ENCODE measurements at regions of chr10 and their contacts with region 1.

Region 1: GRCh38 chr10:69639291-69640195 is 9.5 kb downstream of the FAM241B start:
- DNase-seq: peak; percentile 80
- H3K4me3 Mint-ChIP-seq: no peak overlapping the region
- H3K27ac Mint-ChIP-seq: no peak overlapping the region
- H3K4me1 Mint-ChIP-seq: no peaks in the 10 kb centered on the region
- H3K27me3 Mint-ChIP-seq: peaks cover 1% of the 10 kb centered on the region

Region 2: DNA sequence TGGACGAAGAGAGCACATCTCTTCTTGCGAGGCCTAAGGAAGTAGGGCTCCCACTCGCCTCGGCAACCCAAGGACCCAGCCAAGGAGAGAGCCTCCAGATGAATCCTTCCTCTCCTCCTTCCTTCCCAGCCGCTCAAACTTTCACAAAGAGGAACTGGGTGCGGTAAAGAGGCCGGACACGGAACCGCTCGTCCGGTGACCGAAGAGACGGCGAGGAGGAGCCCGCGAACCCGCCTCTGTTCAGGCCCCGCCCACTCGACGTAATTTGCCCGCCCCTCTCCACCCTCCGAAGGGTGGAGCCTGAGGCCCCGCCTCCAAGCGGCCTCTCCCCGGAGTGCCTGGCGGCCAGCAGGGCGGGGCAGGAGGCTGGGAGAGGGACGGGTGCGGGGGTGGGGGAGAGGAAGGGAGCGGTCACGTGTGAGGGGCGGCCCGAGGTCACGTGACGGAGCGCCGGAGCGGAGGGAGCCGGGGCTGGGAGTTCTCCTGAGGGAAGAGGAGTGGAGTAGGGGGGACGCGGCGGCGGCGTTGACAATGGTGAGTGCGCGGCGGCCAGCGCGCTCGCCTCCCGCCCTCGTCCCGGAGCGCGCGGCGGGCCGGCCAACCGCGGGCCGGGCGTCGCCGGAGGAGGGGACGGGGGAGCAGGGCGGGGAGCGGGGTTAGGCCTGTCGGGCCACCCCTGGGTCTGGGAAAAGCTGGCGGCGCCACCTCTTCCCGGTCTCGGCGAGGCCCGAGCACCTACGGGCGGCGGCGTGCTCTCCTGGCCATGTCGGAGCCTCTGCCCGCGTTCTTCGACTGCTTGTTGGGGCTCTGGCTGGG is 515.6 kb before region 1 on chr10 and contains the start of gene VPS26A:
- CTCF ChIA-PET with region 1: no interaction called
- intact Hi-C with region 1: no loop called
- DNase-seq: peak; percentile 99
- H3K4me3 Mint-ChIP-seq: peak within 1 kb of the TSS; percentile 95
- H3K27ac Mint-ChIP-seq: peak within 1 kb of the TSS; percentile 93
- H3K4me1 Mint-ChIP-seq: peaks cover 38% of the 10 kb centered on the region
- H3K27me3 Mint-ChIP-seq: no peaks in the 10 kb centered on the region
- total RNA-seq, gene VPS26A: 26.2 to 27.9 TPM

Region 3: GRCh38 chr10:69425511-69426298 is 213.8 kb before region 1 on chr10:
- CTCF ChIA-PET with region 1: no interaction called
- intact Hi-C with region 1: loop called (anchors 1 kb)
- DNase-seq: peak; percentile 24
- H3K4me3 Mint-ChIP-seq: no peak overlapping the region
- H3K27ac Mint-ChIP-seq: no peak overlapping the region
- H3K4me1 Mint-ChIP-seq: peaks cover 43% of the 10 kb centered on the region
- H3K27me3 Mint-ChIP-seq: no peaks in the 10 kb centered on the region

Region 4: DNA sequence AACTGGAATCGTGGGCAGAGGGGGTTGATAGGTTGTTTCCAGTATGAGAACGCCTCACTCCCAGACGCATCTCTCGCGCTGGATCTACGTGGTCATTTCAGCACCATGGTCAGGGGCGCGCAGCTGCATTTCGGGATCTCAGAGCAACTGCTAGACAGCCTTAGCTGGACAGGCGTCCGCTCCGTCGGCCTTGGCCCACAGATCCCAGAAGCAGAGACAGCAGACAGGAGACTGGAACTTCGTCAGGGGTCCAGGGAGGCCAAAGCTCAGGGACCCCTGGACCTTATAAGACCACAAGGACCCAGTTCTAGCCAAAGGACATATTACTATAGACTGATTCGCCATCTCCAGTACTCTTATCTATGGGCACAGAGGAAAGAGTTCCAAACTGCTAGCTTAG is 71.6 kb before region 1 on chr10:
- CTCF ChIA-PET with region 1: no interaction called
- intact Hi-C with region 1: no loop called
- DNase-seq: peak; percentile 67
- H3K4me3 Mint-ChIP-seq: no peak overlapping the region
- H3K27ac Mint-ChIP-seq: no peak overlapping the region
- H3K4me1 Mint-ChIP-seq: peaks cover 10% of the 10 kb centered on the region
- H3K27me3 Mint-ChIP-seq: peaks cover 74% of the 10 kb centered on the region

Region 5: GRCh38 chr10:69620625-69621024 is 18.9 kb before region 1 on chr10:
- CTCF ChIA-PET with region 1: interaction called, 12 read pairs
- intact Hi-C with region 1: no loop called
- DNase-seq: no peak
- H3K4me3 Mint-ChIP-seq: no peak overlapping the region
- H3K27ac Mint-ChIP-seq: no peak overlapping the region
- H3K4me1 Mint-ChIP-seq: peaks cover 30% of the 10 kb centered on the region
- H3K27me3 Mint-ChIP-seq: no peaks in the 10 kb centered on the region

Region 6: GRCh38 chr10:69769395-69769992 is 130.0 kb after region 1 on chr10:
- CTCF ChIA-PET with region 1: no interaction called
- intact Hi-C with region 1: no loop called
- DNase-seq: no peak
- H3K4me3 Mint-ChIP-seq: no peak overlapping the region
- H3K27ac Mint-ChIP-seq: no peak overlapping the region
- H3K4me1 Mint-ChIP-seq: no peaks in the 10 kb centered on the region
- H3K27me3 Mint-ChIP-seq: peaks cover 6% of the 10 kb centered on the region

Region 7: DNA sequence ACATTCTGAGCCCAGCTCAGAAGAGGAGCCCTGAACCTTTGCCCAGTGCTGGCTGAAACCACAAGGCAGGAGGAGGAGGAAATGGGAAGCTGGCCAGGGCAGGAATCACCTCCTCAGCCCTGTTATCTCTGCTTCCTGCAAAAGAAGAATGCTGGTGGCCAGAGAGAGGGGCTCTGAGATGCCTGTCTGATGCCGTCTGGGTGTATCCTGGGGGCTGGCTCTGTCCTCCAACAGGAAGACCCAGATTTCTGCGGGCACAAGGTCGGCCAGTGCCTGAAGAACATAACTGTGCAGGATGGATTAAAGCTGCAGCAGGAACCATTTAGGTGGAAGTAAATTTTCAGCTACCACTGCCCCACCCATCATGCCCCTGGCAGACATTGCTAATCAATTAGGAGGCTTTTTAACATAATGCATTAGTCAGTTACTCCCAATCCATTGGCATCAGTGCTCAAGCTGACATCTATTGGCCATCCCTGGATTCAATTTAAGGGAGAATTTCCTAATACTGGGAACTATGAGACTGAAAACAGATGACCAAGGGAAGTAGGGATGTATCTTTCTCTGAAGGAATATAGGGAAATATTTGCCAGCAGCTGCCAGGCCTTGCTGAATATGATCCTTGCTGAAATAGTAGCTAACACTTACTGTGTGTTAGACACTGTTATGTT is 229.9 kb after region 1 on chr10:
- CTCF ChIA-PET with region 1: no interaction called
- intact Hi-C with region 1: no loop called
- DNase-seq: no peak
- H3K4me3 Mint-ChIP-seq: no peak overlapping the region
- H3K27ac Mint-ChIP-seq: no peak overlapping the region
- H3K4me1 Mint-ChIP-seq: no peaks in the 10 kb centered on the region
- H3K27me3 Mint-ChIP-seq: no peaks in the 10 kb centered on the region

Measured in activated naive CD4-positive, alpha-beta T cell treated with anti-CD3 and anti-CD28 coated beads for 36 hours (primary cell).